Ovary (tissue), 10 donors: ENCODE measurements at regions of chr1 and their contacts with region 1.

Region 1: GRCh38 chr1:205056188-205056611 is 13.2 kb downstream of the CNTN2 start:
- DNase-seq: no peak
- H3K4me3 ChIP-seq: no peak overlapping the region
- H3K27ac ChIP-seq: no peak overlapping the region
- H3K4me1 ChIP-seq: no peaks in the 10 kb centered on the region
- H3K27me3 ChIP-seq: no peaks in the 10 kb centered on the region
- CTCF ChIP-seq: no peak
- EP300 ChIP-seq: no peak
- POLR2A ChIP-seq: no peak

Region 2: GRCh38 chr1:204989266-204990058 is 66.7 kb before region 1 on chr1:
- intact Hi-C with region 1: loop called in 2 of 4 experiments (anchors 5 kb)
- DNase-seq: peak; percentile 35 to 82 (median 61)
- H3K4me3 ChIP-seq: no peak overlapping the region
- H3K27ac ChIP-seq: no peak overlapping the region
- H3K4me1 ChIP-seq: no peaks in the 10 kb centered on the region
- H3K27me3 ChIP-seq: no peaks in the 10 kb centered on the region
- CTCF ChIP-seq: peak; percentile 56 to 70 (median 63)
- EP300 ChIP-seq: no peak
- POLR2A ChIP-seq: no peak

Region 3: DNA sequence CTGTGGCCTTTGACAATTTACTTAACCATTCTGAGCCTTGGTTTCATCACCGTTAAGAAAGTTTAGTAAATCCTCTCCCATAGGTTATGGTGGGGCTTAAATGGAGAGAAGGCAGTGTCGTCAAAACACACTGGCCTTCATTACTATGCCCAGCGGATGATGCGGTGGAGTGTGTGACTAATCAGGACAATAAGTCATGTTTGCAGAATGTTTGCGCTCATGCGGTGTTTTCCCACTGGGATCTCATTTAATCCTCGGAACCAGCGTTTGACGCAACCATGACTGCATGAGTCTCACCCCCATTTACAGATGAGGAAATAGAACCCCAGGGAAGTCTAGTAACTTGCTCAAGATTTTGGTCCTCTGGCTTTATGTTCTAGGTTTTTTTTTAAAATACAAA is 869.5 kb after region 1 on chr1:
- intact Hi-C with region 1: no loop called
- DNase-seq: peak in 1 of 5 donors; percentile 11
- H3K4me3 ChIP-seq: no peak overlapping the region
- H3K27ac ChIP-seq: no peak overlapping the region
- H3K4me1 ChIP-seq: no peaks in the 10 kb centered on the region
- H3K27me3 ChIP-seq: no peaks in the 10 kb centered on the region
- CTCF ChIP-seq: no peak
- EP300 ChIP-seq: no peak
- POLR2A ChIP-seq: no peak

Region 4: GRCh38 chr1:206761159-206761768 is 1705.1 kb after region 1 on chr1:
- intact Hi-C with region 1: no loop called
- DNase-seq: no peak
- H3K4me3 ChIP-seq: no peak overlapping the region
- H3K27ac ChIP-seq: no peak overlapping the region
- H3K4me1 ChIP-seq: no peaks in the 10 kb centered on the region
- H3K27me3 ChIP-seq: no peaks in the 10 kb centered on the region
- CTCF ChIP-seq: no peak
- EP300 ChIP-seq: no peak
- POLR2A ChIP-seq: no peak